HepG2 (cell line): ENCODE measurements at regions of chr5 and their contacts with region 1.

Region 1: GRCh38 chr5:170100066-170100943 is 5.4 kb upstream of the FOXI1 start:
- DNase-seq: peak; percentile 62
- ATAC-seq: peak; percentile 76
- H3K4me3 ChIP-seq: no peak overlapping the region
- H3K27ac ChIP-seq: no peak overlapping the region
- H3K4me1 ChIP-seq: no peaks in the 10 kb centered on the region
- H3K27me3 ChIP-seq: no peaks in the 10 kb centered on the region; a peak in 3 of 5 replicates
- CTCF ChIP-seq: peak; percentile 65
- EP300 ChIP-seq: no peak
- POLR2A ChIP-seq: no peak
- RAD21 ChIP-seq: peak; percentile 53; the same call in 1 of the 2 replicates

Region 2: GRCh38 chr5:170183816-170184687 is 83.7 kb after region 1 on chr5:
- CTCF ChIA-PET with region 1: interaction called, 17 read pairs
- POLR2A ChIA-PET with region 1: no interaction called
- in situ Hi-C with region 1: loop called (anchors 5 kb)
- intact Hi-C with region 1: loop called (anchors 1 kb)
- DNase-seq: peak; percentile 49
- ATAC-seq: peak; percentile 97
- H3K4me3 ChIP-seq: no peak overlapping the region
- H3K27ac ChIP-seq: no peak overlapping the region
- H3K4me1 ChIP-seq: peaks cover 11% of the 10 kb centered on the region
- H3K27me3 ChIP-seq: no peaks in the 10 kb centered on the region
- CTCF ChIP-seq: peak; percentile 83
- EP300 ChIP-seq: no peak
- POLR2A ChIP-seq: no peak
- RAD21 ChIP-seq: peak; percentile 51; the same call in 1 of the 2 replicates

Region 3: DNA sequence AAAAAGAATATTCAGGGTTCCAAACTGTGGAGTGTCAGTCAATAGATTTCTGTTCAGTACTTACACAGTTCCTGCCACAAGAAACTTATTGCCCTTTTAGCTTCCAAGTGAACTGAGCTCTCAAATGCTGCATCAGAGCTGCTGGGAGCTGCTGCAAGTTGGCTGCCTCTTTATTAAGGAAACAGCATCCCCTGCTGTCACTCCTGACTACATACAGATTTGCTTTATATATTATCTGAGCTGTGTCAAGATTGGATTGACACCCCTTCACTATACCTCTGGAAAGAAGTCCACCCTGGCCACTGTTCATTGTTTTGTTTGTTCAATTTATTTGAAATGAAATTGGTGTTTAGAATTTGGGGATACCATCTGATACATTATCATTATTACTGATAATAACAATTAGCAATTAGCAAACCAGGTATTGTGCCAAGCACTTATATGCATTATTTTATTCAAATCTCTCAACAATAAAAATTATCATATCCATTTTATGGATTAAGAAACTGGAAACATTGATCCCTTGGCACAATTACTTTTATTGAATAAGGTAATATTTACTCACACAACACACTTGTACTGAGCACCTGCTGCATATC is 116.1 kb after region 1 on chr5:
- CTCF ChIA-PET with region 1: interaction called, 13 read pairs
- POLR2A ChIA-PET with region 1: no interaction called
- in situ Hi-C with region 1: no loop called
- intact Hi-C with region 1: loop called (anchors 1 kb)
- DNase-seq: peak; percentile 29
- ATAC-seq: peak; percentile 74; the same call in 2 of the 3 replicates
- H3K4me3 ChIP-seq: no peak overlapping the region
- H3K27ac ChIP-seq: no peak overlapping the region
- H3K4me1 ChIP-seq: no peaks in the 10 kb centered on the region
- H3K27me3 ChIP-seq: no peaks in the 10 kb centered on the region
- CTCF ChIP-seq: peak; percentile 60
- EP300 ChIP-seq: no peak
- POLR2A ChIP-seq: no peak
- RAD21 ChIP-seq: no peak

Region 4: GRCh38 chr5:170420780-170421412 is 320.6 kb after region 1 on chr5:
- CTCF ChIA-PET with region 1: interaction called, 5 read pairs
- POLR2A ChIA-PET with region 1: no interaction called
- in situ Hi-C with region 1: loop called (anchors 5 kb)
- intact Hi-C with region 1: no loop called
- DNase-seq: peak; percentile 49
- ATAC-seq: peak; percentile 87
- H3K4me3 ChIP-seq: no peak overlapping the region
- H3K27ac ChIP-seq: no peak overlapping the region
- H3K4me1 ChIP-seq: no peaks in the 10 kb centered on the region
- H3K27me3 ChIP-seq: no peaks in the 10 kb centered on the region; a peak in 2 of 5 replicates
- CTCF ChIP-seq: peak; percentile 72
- EP300 ChIP-seq: no peak
- POLR2A ChIP-seq: no peak
- RAD21 ChIP-seq: no peak